ENCODE measurements at regions of chr17 and their contacts with region 1.

Region 1: GRCh38 chr17:66255112-66255511 is 25.9 kb upstream of the APOH start:
- DNase-seq: no peak
- ATAC-seq: peak; percentile 90

Region 2: GRCh38 chr17:66676421-66676820 is 421.3 kb after region 1 on chr17:
- intact Hi-C with region 1: loop called (anchors 5 kb)
- DNase-seq: no peak
- ATAC-seq: peak; percentile 6

Measured in sciatic nerve (tissue), 2 donors.